Posterior vena cava (tissue), 2 donors: ENCODE measurements at regions of chr4 and their contacts with region 1.

Region 1: DNA sequence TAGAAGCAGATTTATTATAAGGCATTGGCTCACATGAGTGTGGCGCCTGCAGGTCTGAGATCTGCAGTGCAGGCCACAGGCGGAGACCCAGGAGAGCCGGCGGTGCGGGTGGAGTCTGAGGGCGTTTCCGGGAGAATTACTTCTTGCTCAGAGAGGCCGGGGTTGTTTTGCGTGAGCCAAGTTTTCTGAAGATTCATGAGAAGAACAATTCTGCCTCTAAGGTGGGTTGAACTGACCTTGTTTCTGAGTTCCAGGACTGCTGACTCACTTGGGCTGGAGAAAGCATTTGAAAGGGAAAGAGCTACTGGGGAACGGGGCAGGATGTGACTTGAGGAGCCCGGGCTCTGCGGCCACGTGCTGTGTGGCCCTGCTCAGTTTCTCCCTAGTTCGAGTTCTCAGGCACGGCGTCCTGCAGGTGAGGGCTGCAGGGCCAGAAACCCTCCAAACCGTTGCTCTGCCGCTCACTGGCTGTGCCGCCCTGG is 36.7 kb upstream of the SORCS2 start:
- DNase-seq: peak; percentile 66

Region 2: DNA sequence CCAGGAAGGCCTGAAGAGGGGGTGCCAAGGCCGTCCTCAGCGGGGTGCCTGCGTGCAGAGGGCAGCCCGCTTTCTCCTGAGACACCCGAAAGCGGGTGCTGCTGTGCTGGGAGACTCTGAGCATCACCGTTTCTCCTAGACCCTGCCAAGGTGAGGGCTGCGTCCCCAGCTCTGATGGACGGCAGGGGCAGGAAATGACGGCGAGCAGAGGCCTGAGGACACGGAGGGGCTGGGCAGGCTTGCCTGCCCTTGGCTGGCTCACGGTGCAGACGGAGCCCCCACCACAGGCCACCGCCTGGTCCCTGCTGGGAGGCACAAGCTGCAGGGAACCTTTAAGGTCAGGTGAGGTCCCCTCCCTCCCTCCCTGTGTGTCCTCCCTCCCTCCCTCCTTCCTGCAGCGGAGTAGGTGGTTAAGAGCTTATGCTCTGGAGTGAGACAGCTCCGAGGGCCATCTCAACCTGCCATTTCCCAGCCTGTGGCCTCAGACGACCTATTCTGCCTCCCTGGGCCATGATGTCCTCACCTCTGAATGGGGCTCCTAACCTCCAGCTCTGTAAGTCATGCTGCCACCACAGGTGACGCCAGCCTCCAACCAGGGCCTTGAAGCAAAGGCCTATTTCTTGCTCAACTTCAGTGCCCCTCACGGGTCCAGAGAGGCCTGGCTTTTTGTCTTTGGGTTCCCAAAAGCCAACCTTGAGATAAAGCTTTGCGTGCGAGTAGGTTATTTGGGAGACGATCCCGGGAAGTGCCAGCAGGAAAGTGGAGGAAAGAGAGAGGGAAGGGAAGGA is 33.6 kb before region 1 on chr4:
- intact Hi-C with region 1: loop called in 1 of 2 experiments (anchors 1 kb)
- DNase-seq: no peak